ENCODE measurements at regions of chr2 and their contacts with region 1.

Region 1: GRCh38 chr2:8456151-8456845 is 225.6 kb upstream of the ID2 start:
- DNase-seq: peak; percentile 66
- H3K4me3 Mint-ChIP-seq: peak overlapping the region; percentile 58
- H3K27ac Mint-ChIP-seq: peak overlapping the region; percentile 81
- H3K4me1 Mint-ChIP-seq: peaks cover 28% of the 10 kb centered on the region
- H3K27me3 Mint-ChIP-seq: peaks cover 19% of the 10 kb centered on the region

Region 2: DNA sequence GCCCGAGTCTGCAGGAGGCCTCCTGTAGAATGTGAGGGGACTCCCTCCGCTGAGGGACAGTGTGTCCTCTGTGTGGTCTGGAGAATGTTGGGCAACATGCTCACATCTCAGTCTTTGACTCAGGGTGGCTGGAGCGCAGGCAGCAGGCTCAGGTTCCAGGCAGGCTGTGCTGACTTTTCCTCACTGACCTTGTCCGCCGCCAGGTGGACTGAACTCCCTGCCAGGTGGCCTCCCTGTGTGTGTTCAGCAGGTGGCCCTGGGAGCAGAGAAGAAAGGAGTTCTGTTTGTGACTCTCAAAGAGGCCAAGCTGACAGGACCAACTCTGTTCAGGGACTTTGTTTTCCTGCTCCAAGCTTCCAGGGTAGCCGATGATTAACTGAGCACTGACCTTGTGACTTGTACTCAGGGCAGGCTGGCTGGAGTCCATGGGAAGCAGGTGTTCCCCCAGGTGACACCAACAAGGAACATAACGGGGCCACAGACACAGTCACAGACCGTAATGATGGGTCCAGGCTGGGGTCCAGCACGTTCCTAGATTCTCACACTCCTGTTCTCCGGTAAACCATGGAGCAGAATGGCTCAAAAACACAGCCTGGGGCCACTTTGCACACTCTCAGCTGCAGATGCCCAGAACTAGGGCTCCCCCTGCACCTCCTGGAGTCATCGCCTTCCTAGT is 1099.3 kb before region 1 on chr2:
- intact Hi-C with region 1: no loop called
- DNase-seq: no peak
- H3K4me3 Mint-ChIP-seq: no peak overlapping the region
- H3K27ac Mint-ChIP-seq: no peak overlapping the region
- H3K4me1 Mint-ChIP-seq: no peaks in the 10 kb centered on the region
- H3K27me3 Mint-ChIP-seq: no peaks in the 10 kb centered on the region

Region 3: DNA sequence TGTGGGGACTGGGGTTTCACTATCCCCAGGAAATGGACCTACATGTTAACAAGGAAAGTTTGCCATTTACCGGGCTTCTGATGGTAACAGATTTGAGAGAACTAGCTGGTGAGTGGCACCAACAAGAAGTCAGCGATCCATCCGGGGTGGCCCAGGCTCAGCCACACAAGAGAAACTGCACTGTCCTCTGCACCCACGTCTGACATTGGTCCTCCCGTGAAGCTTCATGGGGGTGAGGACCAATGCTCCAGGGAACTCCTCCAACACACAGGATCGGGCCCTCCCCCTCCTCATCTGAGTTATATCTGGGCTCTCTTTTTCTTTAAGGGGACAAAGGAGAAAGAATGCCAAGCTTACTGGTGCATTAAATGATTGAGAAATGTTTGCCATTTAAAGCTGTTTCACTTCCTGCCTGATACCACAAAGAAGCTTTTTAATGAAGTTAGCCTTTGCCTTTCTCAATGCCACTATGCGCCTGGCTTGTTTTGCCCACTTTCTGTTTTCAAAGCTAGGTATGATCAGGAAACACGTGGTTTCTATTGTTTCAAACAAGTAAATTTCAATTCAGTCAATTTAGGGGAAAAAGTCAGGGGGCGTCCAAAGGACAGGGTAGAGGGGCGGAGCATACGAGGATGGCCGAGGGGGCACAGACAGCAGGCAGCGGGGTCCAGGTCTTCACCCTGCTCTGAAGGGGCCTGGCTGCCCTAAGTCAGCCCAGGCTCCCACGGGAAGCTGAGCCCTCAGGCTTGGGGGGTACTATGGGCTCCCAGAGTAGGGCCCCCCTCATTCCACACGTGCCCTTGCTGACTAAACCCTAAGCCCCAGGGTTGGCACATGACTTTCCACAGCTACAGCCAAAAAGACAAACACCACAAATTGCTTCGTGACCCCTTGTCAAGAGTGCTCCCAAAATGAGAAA is 21.5 kb after region 1 on chr2:
- intact Hi-C with region 1: loop called (anchors 2 kb)
- DNase-seq: no peak
- H3K4me3 Mint-ChIP-seq: peak overlapping the region; percentile 5
- H3K27ac Mint-ChIP-seq: peak overlapping the region; percentile 72
- H3K4me1 Mint-ChIP-seq: peaks cover 79% of the 10 kb centered on the region
- H3K27me3 Mint-ChIP-seq: no peaks in the 10 kb centered on the region

Region 4: DNA sequence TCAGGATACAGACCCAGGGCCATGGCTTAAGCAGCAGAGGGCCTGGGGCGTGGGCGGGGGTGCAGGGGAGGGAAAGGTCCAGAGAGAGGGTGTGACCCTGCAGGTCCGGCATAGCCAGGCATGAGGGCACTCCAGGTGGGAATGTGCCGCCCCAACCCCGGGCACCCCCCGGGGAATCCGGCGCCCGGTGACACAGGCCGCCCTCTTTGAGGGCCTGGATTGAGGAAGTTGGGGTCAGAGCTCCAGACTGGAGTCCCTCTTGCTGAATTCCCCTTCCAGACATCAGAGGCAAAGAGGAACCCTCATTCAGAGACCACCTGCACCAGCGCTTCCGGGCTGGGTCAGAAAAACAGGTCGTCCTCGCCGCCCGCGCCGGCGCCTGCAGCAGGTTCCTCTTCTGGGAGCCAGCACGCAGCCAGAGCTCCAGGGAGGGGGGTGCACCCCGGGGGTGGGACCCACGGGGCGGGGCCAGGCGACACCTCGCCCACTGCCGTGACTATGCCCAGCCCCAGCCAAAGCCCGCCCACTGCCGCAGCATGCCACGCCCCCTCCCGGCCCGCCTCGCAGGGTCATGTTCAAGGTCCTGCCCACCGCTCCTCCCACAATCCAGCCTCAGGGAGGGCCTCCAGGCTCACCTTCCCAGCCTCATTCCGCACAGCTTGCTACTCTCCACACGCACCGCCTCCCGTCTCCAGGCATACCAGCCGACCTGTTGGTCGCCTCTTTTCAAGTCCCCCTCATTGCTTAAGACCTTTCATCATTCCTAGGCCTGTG is 127.3 kb after region 1 on chr2:
- intact Hi-C with region 1: no loop called
- DNase-seq: peak; percentile 37
- H3K4me3 Mint-ChIP-seq: peak overlapping the region; percentile 45
- H3K27ac Mint-ChIP-seq: no peak overlapping the region
- H3K4me1 Mint-ChIP-seq: peaks cover 58% of the 10 kb centered on the region
- H3K27me3 Mint-ChIP-seq: peaks cover 5% of the 10 kb centered on the region